ENCODE measurements at regions of chr6 and their contacts with region 1.

Region 1: GRCh38 chr6:34638834-34639736 is 57.5 kb downstream of the ILRUN start:
- DNase-seq: peak; percentile 74
- ATAC-seq: peak; percentile 77
- H3K4me3 ChIP-seq: no peak overlapping the region
- H3K4me3 Mint-ChIP-seq: peak overlapping the region; percentile 79
- H3K27ac ChIP-seq: peak overlapping the region; percentile 61 to 86
- H3K27ac Mint-ChIP-seq: peak overlapping the region; percentile 70
- H3K4me1 ChIP-seq: peaks cover 17 to 21% of the 10 kb centered on the region in 2 donors
- H3K4me1 Mint-ChIP-seq: peaks cover 41% of the 10 kb centered on the region
- H3K27me3 ChIP-seq: no peaks in the 10 kb centered on the region
- H3K27me3 Mint-ChIP-seq: no peaks in the 10 kb centered on the region
- CTCF ChIP-seq: no peak

Region 2: DNA sequence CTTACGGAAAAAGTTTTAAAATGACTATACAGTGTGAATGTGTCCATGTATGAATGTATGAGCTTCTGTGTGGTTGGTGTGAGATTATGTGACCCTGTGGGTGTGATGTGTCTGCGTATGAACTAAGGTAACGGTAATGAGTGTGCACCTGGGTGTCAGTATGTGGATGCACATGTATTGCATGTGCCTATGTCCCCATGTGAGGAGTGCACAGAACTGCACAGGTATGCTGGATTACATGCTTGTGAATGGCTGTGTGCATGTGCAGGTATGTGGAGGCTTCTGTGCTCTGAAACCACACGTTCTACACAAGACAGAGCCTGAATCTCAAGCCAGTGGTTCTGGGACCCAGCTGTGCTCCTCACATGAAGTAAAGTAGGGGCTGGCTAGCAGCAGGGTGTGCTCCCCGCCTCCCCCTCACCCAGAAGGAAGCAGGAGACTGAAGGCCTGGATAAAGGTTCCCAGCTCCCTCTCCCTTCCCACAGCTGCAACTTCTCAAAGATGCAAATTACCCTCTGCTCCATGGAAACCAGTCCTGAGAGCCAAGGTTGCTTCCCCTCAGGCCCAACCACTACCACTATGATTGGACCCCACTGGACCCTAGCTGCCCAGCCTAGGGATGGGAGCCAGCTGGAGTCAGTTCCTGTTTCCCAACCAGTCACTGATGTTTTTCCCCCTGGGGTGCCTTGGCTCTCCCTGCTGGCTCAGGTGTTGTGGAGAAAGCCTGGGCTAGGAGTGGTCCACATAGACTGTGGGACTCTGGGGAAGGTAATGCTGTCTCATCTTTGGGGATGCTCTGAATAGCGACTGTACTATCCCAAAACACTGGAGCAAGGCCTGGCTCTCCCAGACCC is 58.2 kb before region 1 on chr6:
- CTCF ChIA-PET with region 1: no interaction called
- POLR2A ChIA-PET with region 1: no interaction called
- intact Hi-C with region 1: no loop called
- DNase-seq: no peak
- ATAC-seq: no peak
- H3K4me3 ChIP-seq: no peak overlapping the region
- H3K4me3 Mint-ChIP-seq: no peak overlapping the region
- H3K27ac ChIP-seq: no peak overlapping the region
- H3K27ac Mint-ChIP-seq: no peak overlapping the region
- H3K4me1 ChIP-seq: no peaks in the 10 kb centered on the region
- H3K4me1 Mint-ChIP-seq: no peaks in the 10 kb centered on the region
- H3K27me3 ChIP-seq: no peaks in the 10 kb centered on the region
- H3K27me3 Mint-ChIP-seq: no peaks in the 10 kb centered on the region
- CTCF ChIP-seq: no peak

Region 3: GRCh38 chr6:34656378-34657036 is 17.4 kb after region 1 on chr6:
- CTCF ChIA-PET with region 1: interaction called, 9 read pairs
- POLR2A ChIA-PET with region 1: interaction called, 3 read pairs
- intact Hi-C with region 1: loop called (anchors 2 kb)
- DNase-seq: peak; percentile 63
- ATAC-seq: peak; percentile 71
- H3K4me3 ChIP-seq: peak overlapping the region in 3 of 5 experiments; percentile 19 to 50 (median 23)
- H3K4me3 Mint-ChIP-seq: peak overlapping the region; percentile 80
- H3K27ac ChIP-seq: peak overlapping the region; percentile 78 to 84
- H3K27ac Mint-ChIP-seq: peak overlapping the region; percentile 88
- H3K4me1 ChIP-seq: peaks cover 34 to 40% of the 10 kb centered on the region in 2 donors
- H3K4me1 Mint-ChIP-seq: peaks cover 51% of the 10 kb centered on the region
- H3K27me3 ChIP-seq: no peaks in the 10 kb centered on the region
- H3K27me3 Mint-ChIP-seq: no peaks in the 10 kb centered on the region
- CTCF ChIP-seq: no peak